BJ (cell line): ENCODE measurements at regions of chr3 and their contacts with region 1.

Region 1: DNA sequence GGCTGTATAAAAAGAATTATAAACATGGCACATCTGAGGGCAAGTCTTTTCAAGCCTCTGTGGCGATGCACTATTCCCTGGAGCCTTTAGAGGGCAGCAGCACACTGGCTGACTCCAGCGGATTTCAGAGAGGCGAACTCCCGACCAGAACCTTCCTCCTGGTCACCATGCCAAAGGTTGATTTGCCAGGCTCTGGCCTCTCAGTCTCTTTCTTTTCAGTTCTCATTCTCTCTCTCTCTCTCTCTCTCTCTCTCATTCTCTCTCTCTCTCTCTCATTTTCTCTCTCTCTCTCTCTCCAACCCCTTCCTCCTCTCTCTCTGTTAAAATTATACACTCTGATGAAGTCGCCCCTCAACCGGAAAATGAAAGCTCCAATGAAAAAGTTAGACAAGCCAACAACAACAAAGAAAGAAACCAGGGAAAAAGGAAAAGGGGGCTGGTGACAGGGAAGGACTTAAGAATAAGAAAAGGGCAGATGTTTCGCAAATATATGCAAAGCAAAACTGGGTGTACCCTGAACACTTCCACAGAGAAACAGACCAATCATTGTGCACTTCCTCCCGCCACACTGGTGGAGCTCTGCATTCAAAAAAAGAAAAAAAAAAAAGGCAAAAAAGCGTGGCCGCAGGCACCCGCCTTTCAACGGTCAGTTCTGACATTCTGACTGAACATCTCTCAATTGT is 90.2 kb downstream of the TIGIT start:
- DNase-seq: no peak
- H3K4me3 ChIP-seq: peak overlapping the region; percentile 24
- H3K27me3 ChIP-seq: no peaks in the 10 kb centered on the region
- CTCF ChIP-seq: peak; percentile 96

Region 2: DNA sequence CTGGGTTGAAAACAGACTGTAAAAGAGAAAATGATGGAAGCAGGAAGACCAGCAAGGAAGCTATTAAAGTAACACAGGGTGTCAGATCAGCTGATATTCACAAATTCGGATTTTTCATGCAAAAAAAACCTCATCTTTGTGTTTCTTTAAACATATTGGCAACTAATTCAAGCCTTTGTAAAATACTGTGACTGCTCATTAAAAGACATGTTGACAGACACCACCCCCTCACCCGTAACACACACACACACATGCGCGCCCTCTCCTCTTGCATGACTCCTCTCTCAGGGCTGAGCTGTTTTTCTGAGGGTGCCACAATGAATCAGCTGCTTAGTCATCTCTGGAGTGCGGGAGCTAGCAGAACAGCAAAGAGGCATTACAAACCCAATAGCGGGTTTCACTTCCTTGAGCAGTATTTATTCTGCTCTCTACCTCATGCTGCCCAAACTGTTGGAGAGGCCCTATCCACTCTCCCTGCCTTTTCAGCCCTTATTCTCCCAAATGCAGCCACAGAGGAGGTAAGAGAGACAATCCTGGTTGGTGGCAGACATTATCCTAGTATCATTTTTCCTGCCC is 1707.3 kb before region 1 on chr3:
- CTCF ChIA-PET with region 1: no interaction called
- POLR2A ChIA-PET with region 1: interaction called, 11 read pairs
- DNase-seq: peak; percentile 90
- H3K4me3 ChIP-seq: no peak overlapping the region
- H3K27me3 ChIP-seq: no peaks in the 10 kb centered on the region
- CTCF ChIP-seq: no peak

Region 3: GRCh38 chr3:114400371-114400770 is 16.4 kb after region 1 on chr3:
- CTCF ChIA-PET with region 1: interaction called, 33 read pairs
- POLR2A ChIA-PET with region 1: interaction called, 3 read pairs
- DNase-seq: no peak
- H3K4me3 ChIP-seq: no peak overlapping the region
- H3K27me3 ChIP-seq: no peaks in the 10 kb centered on the region
- CTCF ChIP-seq: no peak

Region 4: DNA sequence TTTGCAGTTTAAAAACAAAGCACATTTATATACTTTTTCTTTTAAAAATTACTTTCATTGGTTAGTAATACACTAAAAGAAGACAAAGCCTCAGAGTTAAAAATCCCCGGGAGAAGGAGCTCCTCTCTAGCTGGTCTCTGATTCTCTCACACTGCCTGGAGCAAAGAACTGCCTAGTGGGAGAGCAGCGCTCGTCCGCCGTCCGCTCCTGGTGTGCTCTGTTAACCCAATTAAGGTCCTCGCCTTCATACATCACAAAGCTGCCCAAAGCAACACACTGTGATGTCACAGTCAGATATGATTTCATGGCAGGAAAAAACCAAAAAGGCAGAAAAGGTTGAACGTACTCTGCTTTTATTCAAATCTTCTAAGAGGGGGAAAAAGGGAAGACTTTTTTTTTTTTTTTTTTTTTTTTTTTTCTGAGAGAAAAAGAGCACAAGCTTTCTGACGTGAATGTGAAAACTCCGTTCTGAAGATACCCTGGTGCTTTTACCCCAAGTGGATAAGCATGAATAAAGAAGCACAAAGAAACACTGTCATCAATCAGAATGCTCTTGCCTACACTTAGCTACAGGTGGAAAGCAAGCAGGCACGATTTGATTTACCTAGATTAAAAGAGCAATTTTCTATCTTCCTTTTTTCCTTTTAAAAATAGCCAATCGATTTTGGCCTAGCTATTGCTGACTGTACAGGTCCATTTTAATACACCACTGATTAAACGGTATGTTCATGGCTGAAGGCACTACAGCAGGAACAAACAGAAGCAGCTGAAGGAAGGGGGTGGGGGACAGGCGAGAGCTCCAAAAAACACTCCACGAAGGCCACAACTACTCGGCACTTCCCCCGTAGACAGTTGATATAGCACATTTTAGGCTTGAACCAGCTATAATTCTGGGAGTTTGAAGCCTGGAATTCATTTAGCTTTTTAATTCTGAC is 25.0 kb after region 1 on chr3:
- CTCF ChIA-PET with region 1: interaction called, 20 read pairs
- POLR2A ChIA-PET with region 1: interaction called, 3 read pairs
- DNase-seq: no peak
- H3K4me3 ChIP-seq: no peak overlapping the region
- H3K27me3 ChIP-seq: no peaks in the 10 kb centered on the region
- CTCF ChIP-seq: no peak

Region 5: DNA sequence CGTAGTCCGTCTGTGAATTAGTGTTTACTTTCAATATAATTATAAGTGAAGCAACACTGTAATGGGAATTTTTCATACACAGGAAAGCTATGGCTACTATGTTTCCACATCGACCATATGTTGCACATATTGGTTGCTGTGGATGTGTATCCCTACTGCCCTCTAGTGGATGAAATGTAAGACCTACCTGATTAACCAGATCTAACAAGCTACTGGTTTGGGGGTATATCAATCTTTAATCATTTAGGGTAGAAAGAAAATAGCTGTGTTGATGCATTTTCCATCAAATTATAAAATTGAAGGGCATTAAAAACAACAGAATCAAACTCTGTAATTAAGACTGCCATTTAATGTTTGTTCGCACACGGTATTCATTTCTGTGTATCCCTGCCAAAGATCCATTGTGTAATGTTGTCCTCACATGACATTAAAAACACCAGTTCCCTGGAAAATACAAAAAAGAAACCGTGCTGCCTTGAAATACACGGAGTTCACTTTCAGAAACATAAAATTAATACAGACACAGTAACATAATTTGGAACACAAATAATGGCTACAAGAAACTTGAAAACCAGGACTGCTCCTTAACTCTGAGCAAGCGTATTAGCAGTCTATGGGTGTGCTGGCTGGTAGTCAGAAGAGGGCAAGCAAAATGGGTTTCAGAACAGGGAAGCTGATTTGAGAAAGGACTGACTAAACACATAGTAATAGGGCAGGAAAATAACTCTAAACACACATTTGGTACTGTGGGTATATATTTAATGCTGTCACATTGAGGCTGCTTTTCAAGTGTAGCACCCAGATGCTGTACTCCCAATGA is 34.9 kb after region 1 on chr3:
- CTCF ChIA-PET with region 1: interaction called, 34 read pairs
- POLR2A ChIA-PET with region 1: no interaction called
- DNase-seq: peak; percentile 90
- H3K4me3 ChIP-seq: peak overlapping the region; percentile 13; the same call in 1 of the 2 replicates
- H3K27me3 ChIP-seq: no peaks in the 10 kb centered on the region
- CTCF ChIP-seq: peak; percentile 71